ENCODE measurements at regions of chr6 and their contacts with region 1.

Region 1: GRCh38 chr6:45495429-45496084 is 117.8 kb upstream of the SUPT3H start:
- DNase-seq: peak; percentile 38
- H3K4me3 Mint-ChIP-seq: no peak overlapping the region
- H3K27ac Mint-ChIP-seq: peak overlapping the region; percentile 5
- H3K4me1 Mint-ChIP-seq: peaks cover 43% of the 10 kb centered on the region
- H3K27me3 Mint-ChIP-seq: no peaks in the 10 kb centered on the region

Region 2: DNA sequence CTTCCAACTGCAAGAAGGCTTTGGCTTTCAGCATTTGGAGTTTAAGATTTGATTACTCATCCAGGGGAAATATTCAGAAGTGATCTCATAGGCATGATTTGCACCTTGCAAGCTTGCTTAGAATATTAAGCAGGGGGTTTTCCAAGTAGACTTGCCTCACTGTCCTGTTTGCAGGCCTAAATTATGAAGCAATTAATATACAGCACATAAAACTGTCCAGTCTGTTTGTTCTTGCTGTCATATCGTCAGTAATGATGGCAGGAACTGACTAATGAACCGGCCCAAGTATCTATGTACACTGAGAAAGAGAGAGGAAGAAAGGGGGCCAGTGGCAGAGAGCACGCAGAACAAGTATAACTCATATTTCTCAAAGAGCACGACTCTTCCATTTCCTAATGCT is 94.7 kb after region 1 on chr6:
- CTCF ChIA-PET with region 1: no interaction called
- intact Hi-C with region 1: loop called (anchors 5 kb)
- DNase-seq: no peak
- H3K4me3 Mint-ChIP-seq: no peak overlapping the region
- H3K27ac Mint-ChIP-seq: no peak overlapping the region
- H3K4me1 Mint-ChIP-seq: peaks cover 77% of the 10 kb centered on the region
- H3K27me3 Mint-ChIP-seq: no peaks in the 10 kb centered on the region

Region 3: DNA sequence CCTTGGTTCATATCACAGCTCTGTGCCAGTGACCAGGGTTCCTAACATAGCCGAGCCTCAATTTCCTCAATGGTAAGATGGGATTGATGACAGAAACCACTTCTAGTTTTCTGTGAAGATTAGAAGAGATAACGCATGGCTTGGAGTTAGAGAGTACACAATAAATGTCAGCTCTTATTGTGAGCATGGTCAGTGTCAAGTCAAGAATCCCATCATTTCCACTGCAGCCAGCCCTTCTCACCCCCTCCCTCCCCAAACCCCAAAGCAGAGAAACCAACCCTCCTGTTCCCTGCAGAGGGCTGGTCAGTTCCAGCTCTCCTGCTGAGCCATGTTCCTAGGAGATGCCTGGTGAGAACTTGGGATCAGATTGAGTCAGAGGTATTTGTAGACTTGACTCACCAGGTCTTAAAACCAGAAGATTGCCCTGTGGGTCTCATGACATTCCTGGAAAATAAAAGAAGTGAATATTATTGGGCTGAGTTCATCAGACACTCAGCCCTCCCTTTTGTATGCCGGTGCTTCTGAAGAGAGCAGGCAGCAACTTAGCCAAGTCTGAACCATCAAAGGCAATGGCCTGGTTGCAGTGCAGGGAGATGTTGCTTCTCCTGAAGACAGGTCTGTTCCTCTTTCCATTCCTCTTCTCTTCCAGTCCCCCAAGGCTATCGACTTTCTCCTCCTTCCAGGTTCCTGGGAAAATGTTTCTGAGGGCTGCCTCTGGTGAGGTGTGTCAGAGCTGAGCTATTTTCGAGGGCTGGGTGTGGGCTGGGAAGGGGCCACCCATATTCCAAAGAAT is 160.3 kb after region 1 on chr6:
- CTCF ChIA-PET with region 1: no interaction called
- intact Hi-C with region 1: no loop called
- DNase-seq: no peak
- H3K4me3 Mint-ChIP-seq: no peak overlapping the region
- H3K27ac Mint-ChIP-seq: no peak overlapping the region
- H3K4me1 Mint-ChIP-seq: peaks cover 15% of the 10 kb centered on the region
- H3K27me3 Mint-ChIP-seq: peaks cover 1% of the 10 kb centered on the region